Posterior vena cava (tissue), 2 donors: ENCODE measurements at regions of chr9 and their contacts with region 1.

Region 1: DNA sequence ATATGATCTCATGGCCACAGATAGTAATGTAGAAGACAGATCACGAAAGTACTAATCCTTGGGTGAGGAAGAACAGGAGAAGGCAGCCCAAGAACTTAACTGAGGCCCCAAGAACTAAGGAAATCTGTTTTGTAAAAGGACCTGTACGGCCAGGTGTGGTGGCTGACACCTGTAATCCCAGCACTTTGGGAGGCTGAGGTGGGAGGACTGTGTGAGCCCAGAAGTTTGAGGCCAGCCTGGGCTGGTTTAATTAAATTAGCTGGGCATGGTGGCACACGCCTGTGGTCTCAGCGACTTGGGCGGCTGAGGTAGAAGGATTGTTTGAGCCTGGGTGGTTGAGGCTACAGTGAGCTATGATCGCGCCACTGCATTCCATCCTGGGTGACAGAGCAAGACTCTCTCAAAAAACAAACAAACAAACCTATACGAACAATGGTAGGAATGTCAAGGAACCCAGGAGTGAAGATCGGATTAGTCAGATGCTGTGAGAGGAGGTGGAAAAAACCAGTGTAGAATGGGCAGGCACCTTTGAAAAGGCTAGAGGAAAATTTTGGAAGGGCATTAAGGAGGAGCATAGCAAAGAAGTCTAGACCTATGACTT is 283.8 kb upstream of the DMRT1 start:
- DNase-seq: no peak

Region 2: DNA sequence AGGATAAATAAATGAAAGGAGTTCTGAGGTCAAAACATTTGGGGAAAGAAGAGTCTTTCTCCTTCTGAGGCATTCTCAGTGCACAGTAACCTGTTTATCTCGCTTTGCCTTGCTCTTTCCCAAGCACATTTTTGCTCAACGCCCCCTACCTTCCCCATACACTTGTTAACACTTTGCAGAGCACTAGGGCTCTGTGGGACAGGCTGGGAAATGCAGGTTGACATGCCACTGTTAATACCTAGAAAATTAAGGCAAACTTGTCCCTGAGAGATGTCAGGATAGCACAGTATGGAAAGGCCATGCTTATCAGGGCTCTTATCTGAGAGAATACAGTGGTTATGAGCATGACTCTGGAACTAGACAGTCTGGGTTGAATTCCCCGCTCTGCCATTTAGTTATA is 191.1 kb before region 1 on chr9:
- intact Hi-C with region 1: no loop called
- DNase-seq: no peak

Region 3: DNA sequence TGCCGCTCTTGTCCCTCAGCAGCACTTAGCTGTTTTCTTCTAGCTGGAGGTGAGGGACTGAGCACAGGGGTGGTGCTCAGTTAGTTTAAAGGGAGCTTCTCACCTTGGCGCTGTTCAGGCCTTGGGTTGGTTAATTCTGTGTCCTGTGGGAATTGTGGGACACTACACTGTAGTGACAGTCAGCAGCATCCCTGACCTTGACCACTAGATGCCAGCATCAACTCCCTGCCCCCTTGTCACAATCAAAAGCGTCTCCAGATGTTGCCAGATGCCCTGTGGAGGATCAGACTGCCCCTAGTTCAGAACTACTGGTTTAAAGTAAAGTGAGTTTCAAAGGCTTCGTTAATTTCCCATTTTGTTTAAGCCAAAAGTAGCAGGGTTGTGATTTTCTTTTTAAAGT is 353.3 kb after region 1 on chr9:
- intact Hi-C with region 1: loop called in 1 of 2 experiments (anchors 5 kb)
- DNase-seq: no peak